ENCODE measurements at regions of chr17 and their contacts with region 1.

Region 1: GRCh38 chr17:17496189-17497064 is at the start of gene RASD1:
- DNase-seq: peak; percentile 93

Region 2: GRCh38 chr17:17445925-17446665 is 50.3 kb before region 1 on chr17:
- CTCF ChIA-PET with region 1: no interaction called
- POLR2A ChIA-PET with region 1: no interaction called
- DNase-seq: no peak

Region 3: GRCh38 chr17:17463821-17464220 is 32.6 kb before region 1 on chr17:
- CTCF ChIA-PET with region 1: no interaction called
- POLR2A ChIA-PET with region 1: no interaction called
- DNase-seq: no peak

Region 4: DNA sequence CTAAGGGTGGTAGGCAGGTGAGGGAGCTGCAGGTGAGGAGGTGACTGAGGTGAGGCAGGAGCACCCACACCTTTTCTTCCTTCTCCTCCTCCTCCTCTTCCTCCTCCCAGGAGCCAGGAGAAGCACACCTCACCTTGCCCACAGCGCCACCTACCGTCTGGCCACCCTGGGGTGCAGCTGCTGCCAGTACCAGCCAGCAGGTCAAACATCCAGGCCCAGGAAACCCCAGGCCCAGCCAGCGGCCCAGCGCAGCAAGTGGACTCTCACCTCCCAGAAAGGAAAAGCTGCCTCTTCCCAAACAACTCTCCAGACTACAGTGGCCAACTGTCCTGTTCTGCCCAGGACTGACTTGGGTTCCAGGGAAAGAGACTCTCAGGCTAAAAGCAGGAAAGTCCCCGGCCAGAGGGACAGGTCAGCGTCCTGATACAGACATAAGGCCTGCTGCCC is 72.3 kb after region 1 on chr17:
- CTCF ChIA-PET with region 1: interaction called, 21 read pairs
- POLR2A ChIA-PET with region 1: no interaction called
- DNase-seq: peak; percentile 80

Region 5: GRCh38 chr17:17641621-17642409 is 145.4 kb after region 1 on chr17:
- CTCF ChIA-PET with region 1: interaction called, 20 read pairs
- POLR2A ChIA-PET with region 1: interaction called, 7 read pairs
- DNase-seq: peak; percentile 75

Measured in HEK293T (cell line).